ENCODE measurements at regions of chr1 and their contacts with region 1.

Region 1: GRCh38 chr1:201530741-201531531 is 8.0 kb upstream of the NAV1 start:
- DNase-seq: peak; percentile 96
- H3K4me3 ChIP-seq: no peak overlapping the region
- H3K27ac ChIP-seq: peak overlapping the region; percentile 10 to 95 (median 53)
- H3K4me1 ChIP-seq: peaks cover 0 to 49% (median 45%) of the 10 kb centered on the region in 4 donors
- H3K27me3 ChIP-seq: no peaks in the 10 kb centered on the region
- CTCF ChIP-seq: peak; percentile 77 to 88 (median 86)
- EP300 ChIP-seq: no peak
- POLR2A ChIP-seq: no peak

Region 2: DNA sequence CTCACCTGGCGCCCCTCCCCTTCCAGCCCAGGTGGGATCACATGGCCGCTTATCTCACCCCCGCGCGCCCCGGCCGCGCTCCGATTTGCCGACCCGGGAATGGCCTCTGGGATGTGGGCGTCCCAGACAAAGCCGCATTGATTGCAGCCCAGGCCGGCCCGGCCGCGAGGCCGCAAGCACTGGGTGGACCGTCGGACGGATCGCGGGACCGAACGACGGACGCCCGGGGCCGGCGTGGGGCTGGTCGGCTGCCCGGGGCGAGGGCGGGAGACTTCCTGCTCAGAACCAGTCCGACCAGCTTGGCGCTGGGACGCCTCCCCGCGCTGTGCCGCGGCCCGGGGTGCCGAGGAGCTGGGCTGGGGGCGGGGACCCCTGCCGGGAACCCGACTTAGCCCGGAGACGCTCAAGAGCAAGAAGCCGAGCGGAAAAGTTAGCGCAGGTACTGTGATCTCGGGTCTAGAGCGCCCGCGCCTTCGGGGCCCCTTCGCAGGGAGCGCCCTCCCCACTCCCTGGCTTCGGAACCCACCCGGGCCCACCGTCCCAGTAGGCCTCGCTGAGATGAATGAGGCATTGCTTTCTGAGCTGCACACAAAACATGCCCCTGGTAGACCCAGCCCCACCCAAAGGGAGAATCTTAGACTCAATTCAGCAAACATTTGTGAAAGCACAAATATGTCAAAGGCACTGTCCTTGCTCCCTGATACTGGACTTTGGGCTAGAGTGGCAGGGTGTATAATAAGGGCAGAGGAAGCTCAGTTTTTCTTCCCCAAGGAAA is 131.4 kb before region 1 on chr1:
- intact Hi-C with region 1: no loop called
- DNase-seq: no peak
- H3K4me3 ChIP-seq: peak overlapping the region in 3 of 4 donors; percentile 1 to 14 (median 12)
- H3K27ac ChIP-seq: no peak overlapping the region
- H3K4me1 ChIP-seq: peaks cover 0 to 11% (median 5%) of the 10 kb centered on the region in 4 donors
- H3K27me3 ChIP-seq: peaks cover 23 to 44% (median 26%) of the 10 kb centered on the region in 3 donors
- CTCF ChIP-seq: no peak
- EP300 ChIP-seq: no peak
- POLR2A ChIP-seq: peak in 1 of 2 donors; percentile 22

Region 3: GRCh38 chr1:201655243-201655642 is 124.3 kb after region 1 on chr1:
- intact Hi-C with region 1: no loop called
- DNase-seq: peak; percentile 80
- H3K4me3 ChIP-seq: no peak overlapping the region
- H3K27ac ChIP-seq: peak overlapping the region in 1 of 4 donors; percentile 26
- H3K4me1 ChIP-seq: peaks cover 0 to 40% (median 27%) of the 10 kb centered on the region in 4 donors
- H3K27me3 ChIP-seq: no peaks in the 10 kb centered on the region
- CTCF ChIP-seq: no peak
- EP300 ChIP-seq: no peak
- POLR2A ChIP-seq: no peak

Region 4: DNA sequence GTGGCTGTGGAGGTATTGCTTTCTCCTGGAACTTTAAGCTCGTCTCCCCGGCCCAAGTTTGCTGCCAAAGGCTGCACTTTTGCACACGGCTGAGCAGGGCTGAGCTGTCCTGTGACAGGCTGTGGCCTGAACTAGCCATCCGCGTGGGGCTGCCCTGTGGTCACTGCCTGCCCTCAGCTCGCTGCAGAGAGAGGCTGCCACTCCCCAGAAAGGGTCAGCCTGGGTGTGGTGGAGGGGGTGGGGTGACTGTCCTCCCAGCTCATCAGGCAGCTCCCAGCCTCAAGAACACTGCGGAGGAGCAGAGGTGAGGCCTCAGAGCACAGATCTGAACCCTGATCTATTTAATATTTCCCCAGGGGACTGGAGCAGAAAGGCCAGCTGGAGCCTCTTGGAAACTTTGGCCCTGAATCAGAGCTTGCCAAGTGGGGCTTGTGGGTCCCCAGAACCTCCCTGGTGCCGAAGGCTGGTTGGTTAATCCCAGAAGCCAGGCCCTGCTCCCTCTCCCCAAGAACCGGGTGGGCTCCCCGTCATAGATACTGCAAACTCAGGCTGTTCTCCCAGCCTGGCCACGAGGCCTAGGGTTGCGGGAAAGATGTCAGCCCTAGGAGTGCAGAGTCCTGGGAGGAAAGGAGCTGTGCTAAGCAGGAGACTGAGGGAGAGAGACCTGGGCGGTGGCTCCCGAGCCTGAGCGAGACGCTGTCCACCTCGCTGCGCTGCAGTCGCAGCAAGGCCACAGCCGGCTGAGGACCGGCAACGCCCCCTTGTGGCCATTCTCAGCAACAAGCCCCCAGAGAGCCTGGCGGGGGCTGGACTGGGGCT is 172.9 kb after region 1 on chr1:
- intact Hi-C with region 1: loop called (anchors 1 kb)
- DNase-seq: peak; percentile 94
- H3K4me3 ChIP-seq: no peak overlapping the region
- H3K27ac ChIP-seq: peak overlapping the region; percentile 65 to 76 (median 70)
- H3K4me1 ChIP-seq: peaks cover 0 to 37% (median 29%) of the 10 kb centered on the region in 4 donors
- H3K27me3 ChIP-seq: no peaks in the 10 kb centered on the region
- CTCF ChIP-seq: peak; percentile 82 to 96 (median 94)
- EP300 ChIP-seq: no peak
- POLR2A ChIP-seq: no peak

Region 5: DNA sequence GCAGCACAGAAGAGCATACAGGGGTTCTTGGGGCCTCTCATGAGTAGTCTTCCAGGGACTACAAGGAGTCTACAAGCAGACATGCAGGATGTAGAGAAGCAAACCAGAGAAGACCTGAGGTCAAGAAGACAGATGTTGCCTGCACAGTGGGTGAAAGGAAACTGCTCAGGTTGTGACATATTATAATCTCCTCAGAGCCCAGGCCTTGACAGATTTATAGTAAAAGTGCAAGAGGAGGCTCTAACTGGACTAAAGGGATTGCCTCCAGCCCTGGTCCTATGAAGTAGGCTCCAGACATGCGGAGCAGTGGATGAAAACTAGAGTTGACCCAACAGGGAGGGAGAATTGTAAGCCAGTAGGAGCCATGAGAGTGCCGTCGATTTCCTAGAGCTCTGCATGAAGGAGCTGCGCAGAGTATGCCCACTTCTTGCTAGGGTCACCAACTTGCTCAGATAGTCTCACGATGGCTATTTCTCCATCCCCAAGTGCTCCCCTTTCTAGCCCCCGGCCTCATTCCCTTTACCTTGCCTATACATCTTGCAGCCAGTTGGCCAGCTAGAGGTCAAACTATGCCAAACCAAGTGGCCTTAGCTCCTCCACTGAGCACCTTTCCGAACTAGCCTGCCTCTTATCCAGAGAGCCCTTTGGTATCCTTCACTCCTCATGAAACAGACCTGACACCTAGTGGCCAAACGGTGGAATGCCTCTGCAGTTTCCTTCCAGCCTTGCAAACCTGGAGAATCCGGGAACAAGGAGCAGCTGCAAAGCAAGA is 261.8 kb after region 1 on chr1:
- intact Hi-C with region 1: loop called (anchors 2 kb)
- DNase-seq: peak; percentile 90
- H3K4me3 ChIP-seq: no peak overlapping the region
- H3K27ac ChIP-seq: peak overlapping the region; percentile 59 to 76 (median 65)
- H3K4me1 ChIP-seq: peaks cover 0 to 38% (median 36%) of the 10 kb centered on the region in 4 donors
- H3K27me3 ChIP-seq: no peaks in the 10 kb centered on the region
- CTCF ChIP-seq: peak; percentile 89 to 99 (median 97)
- EP300 ChIP-seq: no peak
- POLR2A ChIP-seq: no peak